ENCODE measurements at regions of chr9 and their contacts with region 1.

Region 1: GRCh38 chr9:134163353-134164196 is 789 bp downstream of the RNU6ATAC start:
- DNase-seq: peak; percentile 38 to 87 (median 68)
- ATAC-seq: peak; percentile 19
- H3K4me3 ChIP-seq: no peak overlapping the region
- H3K4me3 Mint-ChIP-seq: no peak overlapping the region
- H3K27ac ChIP-seq: no peak overlapping the region
- H3K27ac Mint-ChIP-seq: no peak overlapping the region
- H3K4me1 ChIP-seq: peaks cover 18% of the 10 kb centered on the region
- H3K4me1 Mint-ChIP-seq: peaks cover 17% of the 10 kb centered on the region
- H3K27me3 ChIP-seq: no peaks in the 10 kb centered on the region
- H3K27me3 Mint-ChIP-seq: no peaks in the 10 kb centered on the region
- CTCF ChIP-seq: peak; percentile 32

Region 2: GRCh38 chr9:133023117-133023890 is 1140.3 kb before region 1 on chr9:
- CTCF ChIA-PET with region 1: no interaction called
- POLR2A ChIA-PET with region 1: no interaction called
- intact Hi-C with region 1: loop called in 1 of 2 experiments (anchors 10 kb)
- DNase-seq: peak in 5 of 9 experiments; percentile 19 to 53 (median 39)
- ATAC-seq: no peak
- H3K4me3 ChIP-seq: no peak overlapping the region
- H3K4me3 Mint-ChIP-seq: no peak overlapping the region
- H3K27ac ChIP-seq: no peak overlapping the region
- H3K27ac Mint-ChIP-seq: no peak overlapping the region
- H3K4me1 ChIP-seq: peaks cover 4% of the 10 kb centered on the region
- H3K4me1 Mint-ChIP-seq: peaks cover 13% of the 10 kb centered on the region
- H3K27me3 ChIP-seq: no peaks in the 10 kb centered on the region
- H3K27me3 Mint-ChIP-seq: no peaks in the 10 kb centered on the region
- CTCF ChIP-seq: no peak

Region 3: GRCh38 chr9:134135343-134136118 is 28.0 kb before region 1 on chr9 and contains the start of gene WDR5:
- CTCF ChIA-PET with region 1: interaction called, 11 read pairs
- POLR2A ChIA-PET with region 1: interaction called, 43 read pairs
- intact Hi-C with region 1: loop called (anchors 1 kb)
- DNase-seq: peak; percentile 81 to 95 (median 90)
- ATAC-seq: peak; percentile 86
- H3K4me3 ChIP-seq: peak within 1 kb of the TSS; percentile 92 to 98
- H3K4me3 Mint-ChIP-seq: peak within 1 kb of the TSS; percentile 89
- H3K27ac ChIP-seq: peak within 1 kb of the TSS; percentile 77 to 90
- H3K27ac Mint-ChIP-seq: peak within 1 kb of the TSS; percentile 95
- H3K4me1 ChIP-seq: peaks cover 38% of the 10 kb centered on the region
- H3K4me1 Mint-ChIP-seq: peaks cover 43% of the 10 kb centered on the region
- H3K27me3 ChIP-seq: no peaks in the 10 kb centered on the region
- H3K27me3 Mint-ChIP-seq: no peaks in the 10 kb centered on the region
- CTCF ChIP-seq: no peak
- total RNA-seq, gene WDR5: 15.5 to 16.6 TPM

Region 4: GRCh38 chr9:134325817-134326723 is 162.5 kb after region 1 on chr9 and contains the start of gene RXRA:
- CTCF ChIA-PET with region 1: interaction called, 3 read pairs
- POLR2A ChIA-PET with region 1: interaction called, 3 read pairs
- intact Hi-C with region 1: loop called in 1 of 2 experiments (anchors 2 kb)
- DNase-seq: peak; percentile 37 to 87 (median 74)
- ATAC-seq: peak; percentile 69
- H3K4me3 ChIP-seq: peak within 1 kb of the TSS; percentile 68 to 93
- H3K4me3 Mint-ChIP-seq: peak within 1 kb of the TSS; percentile 75
- H3K27ac ChIP-seq: peak within 1 kb of the TSS in 1 of 2 experiments; percentile 33
- H3K27ac Mint-ChIP-seq: no peak within 1 kb of the TSS
- H3K4me1 ChIP-seq: peaks cover 16% of the 10 kb centered on the region
- H3K4me1 Mint-ChIP-seq: peaks cover 2% of the 10 kb centered on the region
- H3K27me3 ChIP-seq: no peaks in the 10 kb centered on the region
- H3K27me3 Mint-ChIP-seq: no peaks in the 10 kb centered on the region
- CTCF ChIP-seq: no peak
- total RNA-seq, gene RXRA: 11.6 to 13.7 TPM

Region 5: DNA sequence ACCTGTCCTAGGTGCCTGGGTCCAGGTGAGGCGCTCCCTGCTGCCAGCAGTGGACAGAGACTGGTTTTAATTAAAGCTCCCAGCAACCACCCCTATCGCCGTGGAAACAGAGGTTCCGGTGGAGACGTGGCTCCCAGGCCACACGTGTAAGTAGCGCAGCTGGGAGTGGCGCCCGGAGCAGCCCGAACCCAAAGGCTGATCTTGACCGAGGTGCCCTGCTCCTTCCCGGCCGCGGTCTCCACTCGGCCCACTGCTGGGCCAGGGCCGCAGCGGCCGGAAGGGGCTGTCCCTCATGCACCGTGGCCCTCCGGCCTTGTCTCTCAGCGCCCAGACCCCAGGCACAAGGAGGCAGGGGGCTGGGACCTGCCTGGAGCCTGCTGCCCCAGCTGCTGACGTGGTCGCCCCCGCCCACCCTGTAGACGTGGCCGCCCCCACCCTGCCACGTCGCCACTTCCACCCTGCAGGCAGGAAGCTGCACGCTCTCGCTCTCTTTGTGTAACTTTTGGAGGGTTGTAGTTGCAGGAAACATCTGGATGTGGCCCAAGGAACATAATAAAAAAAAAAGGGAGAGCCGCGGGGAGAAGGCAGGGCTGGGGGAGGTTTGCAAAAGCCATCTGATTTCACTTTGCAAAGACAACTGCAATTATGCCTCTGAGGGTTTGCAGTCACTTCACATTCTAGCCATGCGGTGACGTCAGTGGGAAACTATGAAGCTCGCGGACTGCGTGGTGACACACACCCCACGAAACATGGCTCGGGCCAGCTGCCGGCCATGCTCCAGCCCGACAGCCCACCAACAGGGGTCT is 292.6 kb after region 1 on chr9:
- CTCF ChIA-PET with region 1: no interaction called
- POLR2A ChIA-PET with region 1: interaction called, 18 read pairs
- intact Hi-C with region 1: no loop called
- DNase-seq: peak; percentile 54 to 90 (median 76)
- ATAC-seq: peak; percentile 92
- H3K4me3 ChIP-seq: peak overlapping the region; percentile 50 to 60
- H3K4me3 Mint-ChIP-seq: peak overlapping the region; percentile 86
- H3K27ac ChIP-seq: peak overlapping the region; percentile 82 to 97
- H3K27ac Mint-ChIP-seq: peak overlapping the region; percentile 93
- H3K4me1 ChIP-seq: peaks cover 18% of the 10 kb centered on the region
- H3K4me1 Mint-ChIP-seq: peaks cover 8% of the 10 kb centered on the region
- H3K27me3 ChIP-seq: no peaks in the 10 kb centered on the region
- H3K27me3 Mint-ChIP-seq: no peaks in the 10 kb centered on the region
- CTCF ChIP-seq: no peak